Heart right ventricle (tissue), 16 donors: ENCODE measurements at regions of chr17 and their contacts with region 1.

Region 1: GRCh38 chr17:46002311-46002972 is 3.4 kb downstream of the STH start:
- DNase-seq: peak; percentile 33 to 61
- ATAC-seq: peak; percentile 63 to 90 (median 83)
- H3K4me3 ChIP-seq: no peak overlapping the region
- H3K27ac ChIP-seq: no peak overlapping the region
- H3K4me1 ChIP-seq: peaks cover 0 to 13% (median 0%) of the 10 kb centered on the region in 9 donors
- H3K27me3 ChIP-seq: no peaks in the 10 kb centered on the region
- CTCF ChIP-seq: peak; percentile 88 to 96 (median 94)

Region 2: GRCh38 chr17:46035112-46035818 is 32.8 kb after region 1 on chr17:
- intact Hi-C with region 1: loop called in 3 of 10 experiments (anchors 1 to 5 kb)
- DNase-seq: no peak
- ATAC-seq: no peak
- H3K4me3 ChIP-seq: no peak overlapping the region
- H3K27ac ChIP-seq: no peak overlapping the region
- H3K4me1 ChIP-seq: peaks cover 0 to 21% (median 10%) of the 10 kb centered on the region in 9 donors
- H3K27me3 ChIP-seq: no peaks in the 10 kb centered on the region
- CTCF ChIP-seq: no peak

Region 3: GRCh38 chr17:46044286-46044928 is 42.0 kb after region 1 on chr17:
- intact Hi-C with region 1: loop called in 2 of 10 experiments (anchors 5 kb)
- DNase-seq: peak in 1 of 2 donors; percentile 88
- ATAC-seq: peak; percentile 66 to 88 (median 82)
- H3K4me3 ChIP-seq: no peak overlapping the region
- H3K27ac ChIP-seq: peak overlapping the region in 7 of 10 donors; percentile 3 to 47 (median 23)
- H3K4me1 ChIP-seq: peaks cover 0 to 53% (median 32%) of the 10 kb centered on the region in 9 donors
- H3K27me3 ChIP-seq: no peaks in the 10 kb centered on the region
- CTCF ChIP-seq: peak; percentile 74 to 93 (median 85)

Region 4: GRCh38 chr17:46212634-46213435 is 210.4 kb after region 1 on chr17:
- intact Hi-C with region 1: loop called in 8 of 10 experiments (anchors 1 to 5 kb)
- DNase-seq: peak in 1 of 2 donors; percentile 83
- ATAC-seq: peak in 7 of 8 donors; percentile 71 to 85 (median 77)
- H3K4me3 ChIP-seq: no peak overlapping the region
- H3K27ac ChIP-seq: peak overlapping the region in 2 of 10 donors; percentile 4 to 34
- H3K4me1 ChIP-seq: peaks cover 0 to 33% (median 21%) of the 10 kb centered on the region in 9 donors
- H3K27me3 ChIP-seq: no peaks in the 10 kb centered on the region
- CTCF ChIP-seq: peak; percentile 66 to 94 (median 85)